BJ (cell line): ENCODE measurements at regions of chr2 and their contacts with region 1.

Region 1: DNA sequence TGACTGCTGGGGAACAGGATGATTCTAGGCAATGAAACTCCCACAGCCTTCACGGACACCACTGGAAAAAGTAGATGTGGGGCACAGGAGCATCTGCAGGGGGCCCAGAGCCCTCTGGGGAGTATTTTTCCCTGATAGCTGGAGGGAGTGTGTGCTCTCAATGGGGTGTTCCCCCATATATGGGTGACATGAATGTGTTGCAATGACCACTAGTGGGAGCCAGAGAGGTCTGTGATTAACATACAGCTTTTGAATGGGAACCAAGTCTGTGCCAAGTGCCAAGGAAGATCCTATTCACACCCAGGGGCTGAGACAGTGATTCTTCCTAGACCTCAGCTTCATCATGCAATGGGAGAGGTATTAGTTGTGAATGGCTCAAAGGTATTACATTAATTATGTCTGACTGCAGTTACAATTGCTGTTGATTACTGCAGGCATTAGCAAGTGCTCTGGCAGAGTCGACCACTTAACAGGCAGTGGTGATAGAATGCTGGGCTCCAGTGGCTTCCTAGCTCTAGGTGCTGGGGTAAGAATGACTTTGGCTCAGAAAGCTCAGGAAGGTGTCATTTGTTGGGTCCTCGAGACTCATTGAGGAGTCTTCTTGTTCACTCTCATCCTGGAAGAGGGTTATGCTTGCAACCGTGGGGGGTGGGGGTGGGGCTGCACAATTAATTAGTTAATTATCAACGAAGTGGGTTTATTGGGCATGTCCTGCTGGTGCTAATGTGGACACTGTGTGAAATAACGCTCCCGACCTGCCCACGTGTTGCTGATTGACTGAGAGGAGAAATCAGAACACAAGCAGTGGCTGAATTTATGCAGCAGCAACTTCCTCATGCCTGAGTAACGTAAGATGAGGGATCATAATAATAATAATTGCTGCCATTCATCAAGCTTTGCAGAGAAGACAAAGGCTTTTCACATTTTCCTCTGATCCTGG is 194.1 kb downstream of the CLIP4 start:
- DNase-seq: no peak
- H3K4me3 ChIP-seq: no peak overlapping the region
- H3K27me3 ChIP-seq: peaks cover 4% of the 10 kb centered on the region; the same call in 1 of the 2 replicates
- CTCF ChIP-seq: peak; percentile 89

Region 2: GRCh38 chr2:28958689-28959088 is 350.7 kb before region 1 on chr2:
- CTCF ChIA-PET with region 1: interaction called, 14 read pairs
- POLR2A ChIA-PET with region 1: no interaction called
- DNase-seq: peak; percentile 20
- H3K4me3 ChIP-seq: no peak overlapping the region
- H3K27me3 ChIP-seq: no peaks in the 10 kb centered on the region
- CTCF ChIP-seq: peak; percentile 57

Region 3: DNA sequence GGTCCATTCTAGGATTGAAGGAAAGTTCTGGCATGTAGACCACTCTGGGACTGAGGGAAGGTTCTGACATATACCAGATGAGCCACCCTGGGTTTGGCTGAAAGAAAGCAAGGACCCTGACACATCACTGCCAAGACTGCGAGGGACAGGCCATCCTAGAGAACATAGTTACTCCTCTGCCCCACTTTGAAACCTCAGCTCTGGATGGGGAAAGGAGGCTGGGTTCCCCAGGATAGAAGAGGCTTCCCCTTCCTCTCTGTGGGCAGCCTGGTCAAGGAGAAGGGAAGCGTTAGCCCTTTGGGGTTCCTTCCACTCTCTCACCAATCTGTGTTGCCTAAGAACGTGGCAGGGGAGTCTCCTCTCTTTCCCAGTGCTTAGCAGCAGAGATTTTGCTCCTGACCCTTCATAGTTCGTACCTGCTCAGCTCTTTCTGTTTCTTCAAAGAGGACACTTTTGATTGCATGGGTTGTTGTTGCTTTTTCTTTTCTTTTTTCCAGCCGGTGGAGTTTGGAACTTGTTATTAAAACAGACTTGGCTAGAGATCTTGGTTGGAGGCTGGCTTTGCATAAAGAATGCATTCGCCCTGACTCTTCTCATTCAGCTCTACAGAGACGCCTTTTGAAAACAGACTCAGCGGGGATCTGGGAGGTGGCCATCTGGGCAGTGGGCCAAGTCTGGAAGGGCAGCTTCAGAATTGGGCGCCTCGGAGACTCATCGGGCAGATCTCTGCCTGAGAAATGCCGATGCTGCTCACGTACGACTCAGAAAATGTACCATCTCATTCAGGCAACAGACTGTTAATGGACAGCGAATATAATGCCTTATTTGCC is 28.1 kb before region 1 on chr2:
- CTCF ChIA-PET with region 1: no interaction called
- POLR2A ChIA-PET with region 1: no interaction called
- DNase-seq: no peak
- H3K4me3 ChIP-seq: no peak overlapping the region
- H3K27me3 ChIP-seq: 0 out of 2 replicates have a peak, but pooled peaks cover 1% of the 10 kb centered on the region
- CTCF ChIP-seq: no peak

Region 4: GRCh38 chr2:29295857-29296256 is 13.5 kb before region 1 on chr2:
- CTCF ChIA-PET with region 1: interaction called, 11 read pairs
- POLR2A ChIA-PET with region 1: no interaction called
- DNase-seq: no peak
- H3K4me3 ChIP-seq: no peak overlapping the region
- H3K27me3 ChIP-seq: peaks cover 2% of the 10 kb centered on the region; the same call in 1 of the 2 replicates
- CTCF ChIP-seq: peak; percentile 37

Region 5: GRCh38 chr2:29841386-29842004 is 532.1 kb after region 1 on chr2:
- CTCF ChIA-PET with region 1: interaction called, 36 read pairs
- POLR2A ChIA-PET with region 1: no interaction called
- DNase-seq: no peak
- H3K4me3 ChIP-seq: no peak overlapping the region
- H3K27me3 ChIP-seq: peaks cover 4% of the 10 kb centered on the region; the same call in 1 of the 2 replicates
- CTCF ChIP-seq: peak; percentile 94